ENCODE measurements at regions of chr17 and their contacts with region 1.

Region 1: GRCh38 chr17:21457051-21458026 is 81.2 kb downstream of the KCNJ12 start:
- DNase-seq: peak; percentile 91
- H3K4me3 ChIP-seq: no peak overlapping the region
- H3K27ac ChIP-seq: no peak overlapping the region
- H3K4me1 ChIP-seq: no peaks in the 10 kb centered on the region; the same call in 1 of the 2 replicates
- H3K27me3 ChIP-seq: peaks cover 21% of the 10 kb centered on the region

Region 2: DNA sequence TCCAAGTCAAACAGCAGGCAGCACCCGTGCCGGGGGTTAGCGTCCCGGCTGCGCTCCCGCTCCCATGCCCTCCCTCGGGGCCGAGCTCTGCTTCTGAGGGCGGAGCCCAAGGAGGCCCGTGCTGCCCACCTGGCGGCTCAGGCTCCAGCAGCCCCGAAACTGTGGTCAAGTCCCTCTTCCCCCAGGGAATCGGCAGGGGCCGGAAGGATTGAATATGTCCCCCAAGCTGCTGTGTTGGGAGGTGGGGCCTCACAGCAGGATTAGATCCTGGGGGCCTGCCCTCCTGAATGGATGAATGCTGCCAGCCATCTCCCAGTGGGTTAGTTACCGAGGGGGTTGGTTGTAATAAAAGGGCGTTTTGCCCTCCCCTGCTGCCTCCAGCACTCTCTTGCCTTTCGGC is 138.9 kb before region 1 on chr17:
- in situ Hi-C with region 1: loop called (anchors 10 kb)
- DNase-seq: no peak
- H3K4me3 ChIP-seq: no peak overlapping the region
- H3K27ac ChIP-seq: no peak overlapping the region
- H3K4me1 ChIP-seq: no peaks in the 10 kb centered on the region
- H3K27me3 ChIP-seq: no peaks in the 10 kb centered on the region

Region 3: DNA sequence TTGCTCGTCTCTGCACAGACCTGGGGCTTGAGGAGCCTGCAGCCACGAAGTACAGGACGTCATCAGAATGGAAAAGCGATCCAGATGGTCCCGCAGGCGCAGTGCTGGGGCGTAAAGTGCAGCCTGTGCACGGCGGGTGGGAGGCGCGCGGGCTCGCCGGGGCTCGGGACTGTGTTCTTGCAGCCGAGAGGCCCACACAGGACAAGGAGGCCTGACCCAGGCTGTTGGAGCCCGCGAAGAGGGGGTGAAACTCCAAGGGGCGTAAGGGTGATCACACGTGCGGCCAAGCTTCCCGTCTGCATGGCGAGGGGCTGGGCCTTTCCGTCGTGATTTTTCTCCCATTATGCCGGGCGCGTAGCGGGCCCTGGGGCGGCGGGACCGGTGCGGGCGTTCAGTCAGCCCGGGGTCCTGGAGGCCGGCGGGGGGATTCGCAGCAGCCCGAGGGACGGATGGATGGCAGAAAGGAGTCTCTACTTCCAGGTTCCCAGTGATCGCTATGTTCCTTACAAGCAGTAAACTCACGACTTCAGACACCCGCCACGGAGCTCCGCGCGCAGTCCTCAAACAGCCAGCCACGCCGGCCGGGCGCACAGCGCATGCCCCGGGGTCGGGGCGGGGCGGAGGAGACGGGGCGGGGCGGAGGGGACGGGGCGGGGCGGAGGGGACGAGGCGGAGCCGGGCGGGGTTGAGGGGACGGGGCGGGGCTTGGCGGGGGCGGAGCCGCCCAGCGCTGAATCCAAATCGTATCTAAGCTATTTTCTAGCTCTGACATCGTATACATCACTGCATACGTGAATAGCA is 93.9 kb after region 1 on chr17:
- in situ Hi-C with region 1: loop called (anchors 25 kb)
- DNase-seq: peak; percentile 95
- H3K4me3 ChIP-seq: peak overlapping the region; percentile 76
- H3K27ac ChIP-seq: peak overlapping the region; percentile 86
- H3K4me1 ChIP-seq: peaks cover 23% of the 10 kb centered on the region
- H3K27me3 ChIP-seq: no peaks in the 10 kb centered on the region

Region 4: GRCh38 chr17:21742326-21742725 is 285.0 kb after region 1 on chr17:
- in situ Hi-C with region 1: loop called (anchors 25 kb)
- DNase-seq: no peak
- H3K4me3 ChIP-seq: no peak overlapping the region
- H3K27ac ChIP-seq: no peak overlapping the region
- H3K4me1 ChIP-seq: no peaks in the 10 kb centered on the region
- H3K27me3 ChIP-seq: no peaks in the 10 kb centered on the region